Activated naive CD4-positive, alpha-beta T cell treated with anti-CD3 and anti-CD28 coated beads for 36 hours (primary cell): ENCODE measurements at regions of chr3 and their contacts with region 1.

Region 1: DNA sequence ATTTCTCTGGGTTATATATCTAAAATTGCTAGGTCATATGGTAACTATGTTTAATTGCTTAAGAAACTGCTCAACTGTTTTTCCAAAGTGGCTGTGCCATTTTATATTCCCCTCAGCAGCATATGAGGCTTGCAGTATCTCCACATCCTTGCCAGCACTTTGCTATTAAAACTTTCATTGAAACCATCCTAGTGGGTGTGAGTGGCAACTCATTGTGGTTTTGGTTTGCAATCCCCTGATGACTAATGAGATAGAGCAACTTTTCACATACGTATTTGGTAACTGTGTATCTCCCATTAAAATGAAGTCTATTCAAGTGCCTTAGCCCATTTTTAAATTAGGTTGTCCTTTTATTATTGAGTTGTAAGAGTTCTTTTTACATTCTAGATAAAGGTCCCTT is 17.3 kb downstream of the KPNA1 start:
- DNase-seq: peak; percentile 65
- H3K4me3 Mint-ChIP-seq: no peak overlapping the region
- H3K27ac Mint-ChIP-seq: no peak overlapping the region
- H3K4me1 Mint-ChIP-seq: peaks cover 45% of the 10 kb centered on the region
- H3K27me3 Mint-ChIP-seq: no peaks in the 10 kb centered on the region

Region 2: DNA sequence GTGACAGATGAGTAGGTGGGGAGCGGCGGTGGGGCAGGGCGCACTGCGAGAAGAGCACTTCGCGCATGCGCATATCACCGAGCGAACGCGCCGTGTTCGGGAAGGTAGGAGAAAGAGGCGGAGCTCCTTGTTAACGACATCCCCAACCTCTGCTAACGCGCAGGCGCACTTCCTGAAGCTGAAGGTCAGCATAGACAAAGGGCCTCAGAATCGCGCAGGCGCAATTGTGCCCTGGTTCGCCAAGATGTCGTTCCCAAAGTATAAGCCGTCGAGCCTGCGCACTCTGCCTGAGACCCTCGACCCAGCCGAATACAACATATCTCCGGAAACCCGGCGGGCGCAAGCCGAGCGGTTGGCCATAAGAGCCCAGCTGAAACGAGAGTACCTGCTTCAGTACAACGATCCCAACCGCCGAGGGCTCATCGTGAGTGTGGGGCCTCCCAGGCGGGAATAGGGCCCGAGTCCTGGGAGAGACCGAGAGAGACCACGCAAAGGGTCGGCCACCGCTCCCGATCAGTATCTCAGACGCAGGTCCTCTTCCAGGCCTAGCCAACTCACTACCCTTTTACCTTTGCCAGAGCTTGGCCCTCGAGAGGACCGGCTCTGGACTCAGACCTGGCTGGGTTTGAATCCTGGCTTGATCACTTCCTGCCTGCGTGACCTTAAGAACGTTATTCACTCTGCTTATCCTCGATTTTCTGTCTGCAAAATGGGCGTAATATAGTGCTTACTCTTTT is 1901.1 kb before region 1 on chr3 and contains the start of gene NDUFB4:
- CTCF ChIA-PET with region 1: no interaction called
- intact Hi-C with region 1: loop called (anchors 10 kb)
- DNase-seq: peak; percentile 97
- H3K4me3 Mint-ChIP-seq: peak within 1 kb of the TSS; percentile 86
- H3K27ac Mint-ChIP-seq: peak within 1 kb of the TSS; percentile 95
- H3K4me1 Mint-ChIP-seq: peaks cover 7% of the 10 kb centered on the region
- H3K27me3 Mint-ChIP-seq: no peaks in the 10 kb centered on the region
- total RNA-seq, gene NDUFB4: 146 to 152 TPM

Region 3: DNA sequence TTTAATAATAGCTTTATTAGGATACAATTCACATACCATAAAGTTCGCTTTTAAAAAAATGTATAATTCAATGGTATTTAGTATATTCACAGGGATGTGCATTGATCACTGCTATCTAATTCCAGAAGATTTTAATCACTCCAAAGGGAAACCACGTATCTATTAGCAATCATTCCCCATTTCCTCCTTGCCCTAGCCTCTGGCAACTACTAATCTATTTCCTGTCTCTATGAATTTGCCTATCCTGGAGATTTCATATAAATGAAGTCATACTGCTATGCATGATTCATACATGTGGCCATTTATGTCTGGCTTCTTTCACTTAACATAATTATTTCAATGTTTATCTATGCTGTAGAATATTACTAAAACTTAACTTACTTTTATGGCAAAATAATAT is 345.9 kb before region 1 on chr3:
- CTCF ChIA-PET with region 1: no interaction called
- intact Hi-C with region 1: no loop called
- DNase-seq: no peak
- H3K4me3 Mint-ChIP-seq: no peak overlapping the region
- H3K27ac Mint-ChIP-seq: no peak overlapping the region
- H3K4me1 Mint-ChIP-seq: peaks cover 21% of the 10 kb centered on the region
- H3K27me3 Mint-ChIP-seq: no peaks in the 10 kb centered on the region

Region 4: GRCh38 chr3:122427857-122428471 is 69.5 kb before region 1 on chr3:
- CTCF ChIA-PET with region 1: no interaction called
- intact Hi-C with region 1: loop called (anchors 1 kb)
- DNase-seq: no peak
- H3K4me3 Mint-ChIP-seq: no peak overlapping the region
- H3K27ac Mint-ChIP-seq: peak overlapping the region; percentile 63
- H3K4me1 Mint-ChIP-seq: peaks cover 20% of the 10 kb centered on the region
- H3K27me3 Mint-ChIP-seq: no peaks in the 10 kb centered on the region

Region 5: DNA sequence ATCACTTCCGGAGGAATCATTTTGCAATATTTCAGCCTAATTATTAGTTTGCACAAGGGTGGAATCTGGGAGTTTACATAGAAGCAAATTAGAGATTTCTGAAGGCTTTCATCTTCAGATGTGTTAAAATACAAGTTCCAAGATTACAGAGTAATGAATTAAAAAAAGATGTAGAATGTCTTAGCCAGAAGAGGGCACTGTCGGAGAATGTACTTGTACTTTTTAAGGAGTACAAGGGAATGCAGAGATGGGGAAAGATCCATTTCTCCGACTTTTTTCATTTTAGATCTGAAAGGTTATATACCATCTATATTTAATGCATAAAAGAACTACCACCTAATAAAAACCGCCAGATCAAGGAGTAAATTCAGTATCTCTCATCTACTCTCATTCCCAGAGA is 38.4 kb before region 1 on chr3:
- CTCF ChIA-PET with region 1: no interaction called
- intact Hi-C with region 1: no loop called
- DNase-seq: no peak
- H3K4me3 Mint-ChIP-seq: no peak overlapping the region
- H3K27ac Mint-ChIP-seq: no peak overlapping the region
- H3K4me1 Mint-ChIP-seq: peaks cover 8% of the 10 kb centered on the region
- H3K27me3 Mint-ChIP-seq: no peaks in the 10 kb centered on the region

Region 6: DNA sequence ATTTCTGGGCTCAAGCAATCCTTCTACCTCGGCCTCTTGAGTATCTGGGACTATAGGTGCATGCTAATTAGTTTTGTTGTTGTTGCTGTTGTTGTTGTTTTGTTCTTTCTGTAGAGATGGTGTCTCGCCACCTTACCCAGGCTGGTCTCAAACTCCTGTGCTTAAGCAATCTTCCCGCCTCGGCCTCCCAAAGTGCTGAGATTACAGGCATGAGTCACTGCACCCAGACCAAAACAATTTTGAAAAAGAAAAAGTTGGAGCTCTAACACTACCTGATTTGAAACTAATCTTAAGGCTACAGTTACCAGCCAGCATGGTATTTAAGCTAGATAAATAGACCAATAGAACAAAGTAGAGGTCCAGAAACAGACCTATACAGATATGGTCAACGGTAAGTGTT is 12.4 kb before region 1 on chr3:
- CTCF ChIA-PET with region 1: no interaction called
- intact Hi-C with region 1: loop called (anchors 1 kb)
- DNase-seq: no peak
- H3K4me3 Mint-ChIP-seq: no peak overlapping the region
- H3K27ac Mint-ChIP-seq: no peak overlapping the region
- H3K4me1 Mint-ChIP-seq: peaks cover 66% of the 10 kb centered on the region
- H3K27me3 Mint-ChIP-seq: no peaks in the 10 kb centered on the region

Region 7: DNA sequence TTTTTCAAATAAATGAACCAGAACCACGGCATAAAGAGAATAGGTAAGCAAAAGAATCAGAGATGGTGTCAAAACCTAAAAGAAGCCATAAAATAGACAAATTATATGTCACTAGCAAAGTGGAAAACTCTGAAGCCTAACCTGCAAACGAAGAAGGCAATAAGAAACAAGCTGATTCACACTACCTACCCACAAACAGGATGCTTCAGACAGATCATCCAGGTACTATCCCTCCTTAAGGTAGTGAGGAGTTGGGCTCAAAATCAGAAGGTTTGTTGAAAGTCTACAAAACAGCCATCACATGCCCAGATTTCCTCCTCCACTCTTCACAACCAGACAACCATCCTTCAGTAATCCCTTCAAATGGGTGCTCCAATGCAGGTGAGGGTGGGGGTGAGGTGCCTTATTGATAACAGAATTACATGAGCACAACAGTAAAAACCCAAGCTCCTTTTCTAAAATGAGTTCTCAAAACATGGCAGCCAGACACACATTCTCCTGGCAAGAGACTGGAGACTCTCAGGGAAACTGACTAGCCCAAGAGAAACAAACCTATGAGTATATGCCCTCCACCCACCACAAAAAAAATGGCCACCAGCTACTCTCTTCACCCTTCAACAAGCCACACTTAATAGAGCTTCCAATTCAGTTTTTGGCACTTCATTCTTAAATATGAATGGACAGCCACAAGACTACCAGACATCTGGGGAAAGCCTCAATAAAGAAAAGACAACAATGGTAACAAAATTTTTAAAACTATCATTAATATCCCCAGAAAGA is 10.9 kb after region 1 on chr3:
- CTCF ChIA-PET with region 1: no interaction called
- intact Hi-C with region 1: loop called (anchors 1 kb)
- DNase-seq: peak; percentile 12
- H3K4me3 Mint-ChIP-seq: no peak overlapping the region
- H3K27ac Mint-ChIP-seq: peak overlapping the region; percentile 47
- H3K4me1 Mint-ChIP-seq: peaks cover 78% of the 10 kb centered on the region
- H3K27me3 Mint-ChIP-seq: no peaks in the 10 kb centered on the region

Region 8: GRCh38 chr3:122514123-122515019 is 16.9 kb after region 1 on chr3 and contains the start of gene KPNA1:
- CTCF ChIA-PET with region 1: no interaction called
- intact Hi-C with region 1: loop called (anchors 1 kb)
- DNase-seq: peak; percentile 86
- H3K4me3 Mint-ChIP-seq: peak within 1 kb of the TSS; percentile 73
- H3K27ac Mint-ChIP-seq: peak within 1 kb of the TSS; percentile 77
- H3K4me1 Mint-ChIP-seq: peaks cover 42% of the 10 kb centered on the region
- H3K27me3 Mint-ChIP-seq: no peaks in the 10 kb centered on the region
- total RNA-seq, gene KPNA1: 45.6 to 45.8 TPM

Region 9: GRCh38 chr3:122533931-122534334 is 36.5 kb after region 1 on chr3:
- CTCF ChIA-PET with region 1: no interaction called
- intact Hi-C with region 1: loop called (anchors 1 kb)
- DNase-seq: peak; percentile 77
- H3K4me3 Mint-ChIP-seq: no peak overlapping the region
- H3K27ac Mint-ChIP-seq: peak overlapping the region; percentile 28
- H3K4me1 Mint-ChIP-seq: peaks cover 35% of the 10 kb centered on the region
- H3K27me3 Mint-ChIP-seq: no peaks in the 10 kb centered on the region